Dendritic cell treated with granulocyte-macrophage colony-stimulating factor and Interleukin-4, amounts not matched to agents 40 ng/mL and 50 ng/mL, for 4 days (primary cell): ENCODE measurements at regions of chr11 and their contacts with region 1.

Region 1: GRCh38 chr11:73625696-73626318 is 20.6 kb upstream of the PLEKHB1 start:
- H3K4me3 Mint-ChIP-seq: no peak overlapping the region
- H3K27ac Mint-ChIP-seq: peak overlapping the region; percentile 63
- H3K4me1 Mint-ChIP-seq: peaks cover 44% of the 10 kb centered on the region
- H3K27me3 Mint-ChIP-seq: no peaks in the 10 kb centered on the region

Region 2: DNA sequence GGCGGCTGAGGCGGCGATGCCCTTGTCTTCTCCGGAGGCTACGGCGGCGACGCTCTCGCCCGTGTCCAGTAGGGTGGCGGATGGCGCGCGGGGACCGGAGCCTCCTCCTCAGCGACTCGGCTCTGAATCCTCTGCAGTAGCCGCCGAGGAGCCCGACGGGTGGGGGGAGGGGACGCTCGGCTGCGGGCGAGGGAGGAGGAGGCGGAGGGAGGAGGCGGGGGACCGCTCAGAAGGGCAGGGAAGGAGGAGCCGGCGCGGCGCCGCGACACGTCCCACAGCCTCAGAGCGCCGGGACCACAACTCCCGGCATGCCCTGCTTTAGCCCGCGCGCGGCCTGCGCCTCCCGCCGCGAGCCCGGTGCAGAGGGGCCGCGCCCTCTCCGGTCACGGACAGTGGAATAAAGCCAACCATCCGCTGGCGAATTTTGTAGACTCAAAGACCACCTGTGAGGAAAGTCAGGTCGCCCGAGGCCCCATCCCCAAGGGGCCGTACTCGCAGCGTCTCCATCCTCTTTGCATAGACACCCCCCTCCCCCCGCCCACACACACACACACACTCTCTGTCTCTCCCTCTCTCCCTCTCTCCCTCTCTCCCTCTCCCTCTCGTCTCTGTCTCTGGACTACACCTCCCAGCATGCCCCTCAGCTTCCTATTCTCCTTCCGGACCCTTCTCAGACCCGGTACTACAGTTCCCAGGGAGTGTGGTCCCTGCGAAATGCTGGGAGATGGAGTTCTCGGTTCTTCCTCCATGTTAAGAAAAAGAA is 27.7 kb before region 1 on chr11 and contains the start of gene FAM168A:
- intact Hi-C with region 1: loop called (anchors 1 kb)
- H3K4me3 Mint-ChIP-seq: peak within 1 kb of the TSS; percentile 87
- H3K27ac Mint-ChIP-seq: peak within 1 kb of the TSS; percentile 93
- H3K4me1 Mint-ChIP-seq: peaks cover 39% of the 10 kb centered on the region
- H3K27me3 Mint-ChIP-seq: no peaks in the 10 kb centered on the region